ENCODE measurements at regions of chr3 and their contacts with region 1.

Region 1: GRCh38 chr3:32882603-32883025 is 64.8 kb downstream of the TRIM71 start:
- DNase-seq: peak; percentile 46
- ATAC-seq: peak; percentile 96
- H3K4me3 Mint-ChIP-seq: peak overlapping the region; percentile 22
- H3K27ac Mint-ChIP-seq: peak overlapping the region; percentile 44
- H3K4me1 Mint-ChIP-seq: peaks cover 28% of the 10 kb centered on the region
- H3K27me3 Mint-ChIP-seq: peaks cover 65% of the 10 kb centered on the region

Region 2: GRCh38 chr3:32901432-32902409 is 19.1 kb after region 1 on chr3:
- CTCF ChIA-PET with region 1: interaction called, 18 read pairs
- DNase-seq: peak; percentile 59
- ATAC-seq: no peak
- H3K4me3 Mint-ChIP-seq: no peak overlapping the region
- H3K27ac Mint-ChIP-seq: no peak overlapping the region
- H3K4me1 Mint-ChIP-seq: peaks cover 7% of the 10 kb centered on the region
- H3K27me3 Mint-ChIP-seq: peaks cover 41% of the 10 kb centered on the region

Measured in activated CD8-positive, alpha-beta memory T cell treated with anti-CD3 and anti-CD28 coated beads, Interleukin-2, amount 10 ng/mL, durations not matched to agents 7 days and 5 days (primary cell).